ENCODE measurements at regions of chr16 and their contacts with region 1.

Region 1: GRCh38 chr16:73068541-73069401 is 20.8 kb upstream of the ZFHX3 start:
- DNase-seq: peak; percentile 93 to 95
- ATAC-seq: peak; percentile 90
- H3K4me3 ChIP-seq: no peak overlapping the region
- H3K27ac ChIP-seq: peak overlapping the region; percentile 99 to 100
- H3K4me1 ChIP-seq: peaks cover 2 to 4% of the 10 kb centered on the region in 2 donors
- H3K27me3 ChIP-seq: no peaks in the 10 kb centered on the region

Region 2: GRCh38 chr16:72787514-72788268 is 281.1 kb before region 1 on chr16:
- intact Hi-C with region 1: loop called in 1 of 2 experiments (anchors 5 kb)
- DNase-seq: peak; percentile 87 to 89
- ATAC-seq: peak; percentile 89
- H3K4me3 ChIP-seq: peak overlapping the region; percentile 30 to 45
- H3K27ac ChIP-seq: peak overlapping the region; percentile 94 to 95
- H3K4me1 ChIP-seq: peaks cover 0 to 4% of the 10 kb centered on the region in 2 donors
- H3K27me3 ChIP-seq: no peaks in the 10 kb centered on the region

Region 3: GRCh38 chr16:72908362-72909167 is 160.2 kb before region 1 on chr16:
- intact Hi-C with region 1: no loop called
- DNase-seq: no peak
- ATAC-seq: no peak
- H3K4me3 ChIP-seq: no peak overlapping the region
- H3K27ac ChIP-seq: no peak overlapping the region
- H3K4me1 ChIP-seq: no peaks in the 10 kb centered on the region
- H3K27me3 ChIP-seq: no peaks in the 10 kb centered on the region

Region 4: GRCh38 chr16:73172241-73172972 is 103.6 kb after region 1 on chr16:
- intact Hi-C with region 1: loop called (anchors 2 to 5 kb)
- DNase-seq: peak; percentile 83 to 93
- ATAC-seq: peak; percentile 73
- H3K4me3 ChIP-seq: no peak overlapping the region
- H3K27ac ChIP-seq: peak overlapping the region; percentile 76 to 94
- H3K4me1 ChIP-seq: peaks cover 0 to 5% of the 10 kb centered on the region in 2 donors
- H3K27me3 ChIP-seq: no peaks in the 10 kb centered on the region

Measured in aorta (tissue), 5 donors.